A549 (cell line): ENCODE measurements at regions of chr3 and their contacts with region 1.

Region 1: DNA sequence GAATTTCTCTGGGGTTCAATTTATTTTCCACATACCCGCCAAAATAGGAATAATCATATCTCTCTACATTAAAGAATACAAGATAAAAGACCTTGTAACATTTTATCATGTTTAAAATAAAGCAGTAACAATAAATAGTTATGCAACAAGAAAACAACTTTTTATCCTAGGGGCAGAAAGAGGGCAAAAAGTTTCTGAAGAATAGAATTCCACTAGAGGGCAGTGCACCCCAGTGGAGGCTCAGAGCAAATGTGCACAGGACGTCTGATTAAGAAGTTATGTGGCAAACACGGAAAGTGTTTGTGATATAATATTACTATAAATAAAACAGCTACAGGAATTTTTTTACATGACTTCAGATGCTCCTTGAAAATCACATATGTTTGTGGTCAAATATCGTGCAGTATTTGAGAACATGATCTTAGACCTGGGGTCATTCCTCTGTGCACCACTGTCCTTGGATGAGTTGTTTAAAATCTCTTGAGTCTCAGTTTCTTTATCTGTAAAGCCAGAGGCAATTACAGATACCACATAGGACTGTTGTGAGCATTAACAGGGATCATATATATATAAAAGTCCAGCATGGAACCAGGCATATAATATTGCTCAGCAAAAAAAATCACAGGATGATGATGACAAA is 13.2 kb upstream of the PIK3R4 start:
- DNase-seq: peak; percentile 21 to 52
- ATAC-seq: peak; percentile 66 to 84; a peak in 4 of 6 replicates
- H3K4me3 ChIP-seq: no peak overlapping the region
- H3K27ac ChIP-seq: no peak overlapping the region
- H3K4me1 ChIP-seq: 0 out of 3 replicates have a peak, but pooled peaks cover 6% of the 10 kb centered on the region
- CTCF ChIP-seq: peak; percentile 77
- EP300 ChIP-seq: no peak
- POLR2A ChIP-seq: no peak
- RAD21 ChIP-seq: peak; percentile 74 to 76

Region 2: DNA sequence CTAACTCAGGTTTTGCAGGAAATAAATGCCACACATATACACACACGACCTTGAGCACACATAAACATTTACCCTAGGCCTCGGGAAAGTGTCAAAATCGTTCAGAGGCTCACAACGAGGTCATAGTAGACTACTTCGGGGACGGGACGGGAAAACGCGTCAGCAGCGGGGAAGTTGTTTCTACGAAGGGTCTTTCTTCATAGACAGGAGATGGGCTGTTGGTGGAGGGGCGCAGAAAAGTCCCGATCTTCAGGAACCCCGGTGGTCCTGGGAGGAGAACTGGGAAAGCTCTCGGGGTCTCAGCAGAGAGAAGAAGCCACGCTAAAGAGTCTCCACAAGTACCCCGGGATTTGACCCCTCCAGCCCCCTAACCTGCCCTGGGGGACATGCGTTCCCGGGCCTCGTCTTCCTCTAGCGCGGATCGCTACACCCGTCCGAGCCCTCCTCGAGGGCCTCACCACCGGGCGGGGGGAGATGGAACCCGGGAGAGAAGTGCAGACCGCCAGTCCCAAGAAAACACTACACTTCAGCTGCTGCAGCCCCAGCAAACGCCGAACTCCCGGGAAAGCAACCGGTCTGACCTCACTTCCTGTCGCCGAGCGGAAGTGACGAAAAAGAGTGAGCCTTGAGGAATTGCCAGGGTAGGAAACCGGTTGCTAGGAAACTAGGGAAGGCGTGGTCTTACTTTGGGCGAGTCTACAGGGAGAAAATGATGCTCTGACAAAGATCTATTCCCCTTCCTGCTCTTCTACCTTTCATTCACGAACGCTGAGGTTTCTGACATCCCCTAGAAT is 13.4 kb before region 1 on chr3 and contains the start of gene PIK3R4:
- CTCF ChIA-PET with region 1: interaction called, 15 read pairs
- POLR2A ChIA-PET with region 1: no interaction called
- DNase-seq: peak; percentile 78 to 96
- ATAC-seq: peak; percentile 89 to 95
- H3K4me3 ChIP-seq: peak within 1 kb of the TSS; percentile 96
- H3K27ac ChIP-seq: peak within 1 kb of the TSS; percentile 86 to 92
- H3K4me1 ChIP-seq: peaks cover 24% of the 10 kb centered on the region; the same call in 2 of the 3 replicates
- CTCF ChIP-seq: no peak
- EP300 ChIP-seq: no peak
- POLR2A ChIP-seq: peak; percentile 60
- RAD21 ChIP-seq: no peak
- polyA plus RNA-seq, gene PIK3R4: 27.8 and 35.6 TPM in 2 replicates

Region 3: GRCh38 chr3:130773366-130773765 is 13.5 kb after region 1 on chr3:
- CTCF ChIA-PET with region 1: interaction called, 10 read pairs
- POLR2A ChIA-PET with region 1: no interaction called
- DNase-seq: no peak
- ATAC-seq: no peak
- H3K4me3 ChIP-seq: no peak overlapping the region
- H3K27ac ChIP-seq: no peak overlapping the region
- H3K4me1 ChIP-seq: no peaks in the 10 kb centered on the region
- CTCF ChIP-seq: no peak
- EP300 ChIP-seq: no peak
- POLR2A ChIP-seq: no peak
- RAD21 ChIP-seq: no peak

Region 4: DNA sequence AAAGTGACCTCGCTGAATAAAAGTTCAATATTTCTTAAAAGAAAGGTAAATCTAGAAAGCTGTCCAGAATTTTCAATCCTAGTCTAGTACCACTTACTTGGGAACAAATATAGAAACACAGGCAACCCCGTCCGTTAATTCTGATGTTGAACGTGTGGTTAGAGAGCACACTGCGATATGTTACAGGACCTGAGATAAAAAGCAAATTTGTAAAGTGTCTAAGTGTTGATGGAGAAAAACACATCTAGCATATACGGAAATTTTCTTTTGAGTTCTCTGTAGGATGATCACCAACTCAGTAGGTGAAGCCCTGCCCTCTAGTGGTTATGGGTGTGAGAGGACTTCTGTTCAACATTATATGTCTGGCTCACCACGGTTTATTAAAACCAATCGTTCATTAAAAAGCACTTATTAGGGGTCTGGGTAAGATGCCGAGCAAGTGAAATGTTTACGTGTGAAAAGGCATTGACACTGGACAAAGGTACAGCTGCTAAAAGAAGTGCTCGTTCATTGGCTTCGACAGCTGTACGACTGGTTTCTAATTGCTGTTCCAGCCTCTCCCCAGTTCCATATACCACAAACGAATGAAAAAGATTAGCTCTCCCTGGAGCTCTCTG is 133.0 kb after region 1 on chr3:
- CTCF ChIA-PET with region 1: interaction called, 17 read pairs
- POLR2A ChIA-PET with region 1: interaction called, 6 read pairs
- DNase-seq: peak; percentile 73
- ATAC-seq: peak; percentile 73 to 77
- H3K4me3 ChIP-seq: peak overlapping the region; percentile 99
- H3K27ac ChIP-seq: peak overlapping the region; percentile 98 to 99
- H3K4me1 ChIP-seq: peaks cover 14% of the 10 kb centered on the region; the same call in 2 of the 3 replicates
- CTCF ChIP-seq: peak; percentile 82
- EP300 ChIP-seq: no peak
- POLR2A ChIP-seq: no peak
- RAD21 ChIP-seq: peak; percentile 69 to 70